ENCODE measurements at regions of chr9 and their contacts with region 1.

Region 1: GRCh38 chr9:18442629-18443491 is 31.1 kb upstream of the ADAMTSL1 start:
- DNase-seq: peak; percentile 71 to 86
- ATAC-seq: peak; percentile 77
- H3K4me3 ChIP-seq: no peak overlapping the region
- H3K27ac ChIP-seq: no peak overlapping the region
- H3K4me1 ChIP-seq: peaks cover 0 to 12% of the 10 kb centered on the region in 2 donors
- H3K27me3 ChIP-seq: no peaks in the 10 kb centered on the region

Region 2: DNA sequence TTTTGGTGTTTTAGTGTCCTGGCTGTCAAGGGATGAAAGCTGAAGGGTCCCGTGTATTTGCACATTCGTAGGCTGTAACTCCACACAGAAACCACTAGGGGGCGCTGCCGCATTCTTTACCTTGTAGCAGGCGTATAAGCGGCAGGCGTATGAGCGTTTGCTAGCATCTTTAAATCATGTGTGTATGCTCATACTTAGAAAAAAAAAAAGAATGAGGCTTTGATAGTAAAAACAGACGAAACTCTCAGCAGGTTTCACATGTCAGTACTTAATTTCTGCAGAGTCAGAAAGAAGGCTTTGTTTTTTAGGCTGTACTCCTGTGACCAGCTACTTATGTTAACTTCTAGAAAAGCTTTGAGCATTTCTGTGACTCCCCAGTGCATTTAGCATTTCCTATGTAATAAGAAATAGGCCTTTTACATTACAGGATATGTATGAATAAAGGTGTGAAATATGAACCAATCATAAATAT is 187.7 kb before region 1 on chr9:
- intact Hi-C with region 1: loop called (anchors 5 kb)
- DNase-seq: peak; percentile 83 to 94
- ATAC-seq: peak; percentile 88
- H3K4me3 ChIP-seq: no peak overlapping the region
- H3K27ac ChIP-seq: no peak overlapping the region
- H3K4me1 ChIP-seq: peaks cover 0 to 4% of the 10 kb centered on the region in 2 donors
- H3K27me3 ChIP-seq: no peaks in the 10 kb centered on the region

Region 3: DNA sequence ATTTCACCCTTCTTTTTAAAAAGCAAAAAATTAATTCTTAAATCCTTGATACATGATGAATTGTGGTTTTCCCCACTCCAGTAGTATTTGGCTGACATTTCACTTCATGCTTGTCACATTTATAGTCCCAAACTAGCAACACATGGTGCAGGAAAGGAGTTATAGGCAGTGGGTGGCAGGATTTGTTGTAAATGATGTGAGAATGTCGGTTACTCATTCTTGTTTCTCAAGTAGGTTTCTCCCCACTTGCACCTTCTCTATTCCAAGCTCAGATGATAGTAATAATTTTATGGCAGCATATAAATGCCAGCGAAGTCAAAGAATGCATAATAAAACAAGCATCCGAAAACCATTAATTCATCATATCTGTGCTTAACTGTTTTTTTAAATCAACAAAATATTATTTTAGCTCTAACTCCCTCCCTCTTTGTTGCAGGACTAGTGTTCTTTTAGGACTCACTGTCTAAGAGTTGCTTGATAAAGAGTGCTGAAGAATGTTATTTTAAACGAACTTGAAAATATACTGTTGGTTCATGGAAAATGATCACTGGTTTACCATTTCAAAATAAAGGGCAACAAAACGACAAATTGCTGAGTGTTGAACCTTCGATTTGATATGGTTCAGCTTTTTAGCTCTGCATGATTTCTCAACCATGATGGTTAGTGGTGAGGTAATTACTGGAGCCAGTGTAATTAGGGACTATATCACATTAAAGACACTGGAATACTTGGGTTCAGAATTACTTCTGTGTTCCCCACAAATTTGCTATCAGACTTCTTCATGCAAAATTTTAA is 57.0 kb before region 1 on chr9:
- intact Hi-C with region 1: loop called in 1 of 2 experiments (anchors 10 kb)
- DNase-seq: no peak
- ATAC-seq: no peak
- H3K4me3 ChIP-seq: peak overlapping the region in 1 of 2 donors; percentile 18
- H3K27ac ChIP-seq: no peak overlapping the region
- H3K4me1 ChIP-seq: peaks cover 2 to 6% of the 10 kb centered on the region in 2 donors
- H3K27me3 ChIP-seq: no peaks in the 10 kb centered on the region

Region 4: GRCh38 chr9:18721267-18721994 is 278.6 kb after region 1 on chr9:
- intact Hi-C with region 1: no loop called
- DNase-seq: no peak
- ATAC-seq: no peak
- H3K4me3 ChIP-seq: no peak overlapping the region
- H3K27ac ChIP-seq: no peak overlapping the region
- H3K4me1 ChIP-seq: no peaks in the 10 kb centered on the region
- H3K27me3 ChIP-seq: no peaks in the 10 kb centered on the region

Region 5: DNA sequence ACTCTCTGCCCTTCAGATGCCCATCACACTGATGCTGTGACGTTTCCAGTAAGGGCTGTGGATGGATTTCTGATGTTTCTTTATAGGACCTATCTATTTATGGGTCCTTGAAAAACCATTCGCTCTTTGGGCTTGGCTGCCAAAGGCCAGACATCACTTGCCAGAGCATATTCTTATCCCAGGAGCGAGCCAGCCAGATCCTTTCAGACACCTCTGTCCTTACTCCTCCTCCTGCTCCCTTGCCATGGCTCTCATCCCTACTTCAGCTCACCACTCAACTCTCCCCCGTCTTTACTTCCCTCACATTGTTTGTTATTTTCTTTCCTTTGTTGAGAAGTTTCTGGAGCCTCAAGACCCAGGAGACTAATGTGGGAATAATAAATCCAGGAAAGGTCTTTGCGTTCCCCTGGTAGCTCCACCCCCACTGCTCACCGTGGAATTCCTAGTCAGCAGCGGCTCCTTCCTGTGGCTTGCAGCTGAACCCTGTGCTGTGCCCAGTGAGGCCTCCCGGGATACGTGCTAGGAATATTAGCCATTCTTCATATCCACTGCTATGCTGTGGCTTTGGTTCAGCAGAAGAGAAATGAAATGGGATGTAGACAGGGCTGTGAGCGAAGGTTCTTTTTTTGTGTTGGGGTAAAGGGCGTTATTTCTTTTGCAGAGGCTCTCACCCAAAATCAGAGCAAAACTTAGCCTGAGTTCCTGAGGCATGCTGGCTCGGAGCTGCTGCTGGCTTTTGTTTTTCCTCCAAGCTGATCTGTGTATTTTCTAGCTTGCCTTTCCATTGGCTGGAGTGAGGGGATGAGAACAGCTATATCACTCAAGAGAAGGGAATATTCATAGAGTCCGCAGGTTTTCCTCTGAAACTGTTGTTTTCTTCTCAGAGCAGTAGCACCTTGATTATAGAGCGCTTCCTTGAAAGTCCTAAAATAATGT is 419.0 kb after region 1 on chr9:
- intact Hi-C with region 1: loop called in 1 of 2 experiments (anchors 5 kb)
- DNase-seq: peak; percentile 83 to 85
- ATAC-seq: peak; percentile 90
- H3K4me3 ChIP-seq: no peak overlapping the region
- H3K27ac ChIP-seq: peak overlapping the region; percentile 84 to 87
- H3K4me1 ChIP-seq: peaks cover 0 to 2% of the 10 kb centered on the region in 2 donors
- H3K27me3 ChIP-seq: no peaks in the 10 kb centered on the region

Region 6: DNA sequence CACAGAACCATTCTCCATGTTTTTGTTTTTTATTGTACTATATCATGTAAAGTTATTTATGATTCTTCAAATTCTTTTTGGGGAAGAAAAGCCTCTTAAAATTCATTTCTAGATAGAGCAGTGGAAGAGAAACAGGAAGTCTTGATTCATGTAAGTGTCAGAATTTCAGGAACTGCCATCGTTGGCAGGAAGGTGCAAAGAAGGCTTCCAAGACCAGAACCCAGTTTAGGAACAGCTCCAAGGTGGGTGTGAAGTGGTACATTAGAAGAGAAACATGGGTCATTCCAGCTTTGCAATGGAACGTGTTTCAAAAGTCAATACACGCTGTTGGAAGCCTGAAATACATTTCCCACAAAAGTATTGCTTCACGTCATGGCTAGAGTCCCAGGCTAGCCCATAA is 575.3 kb after region 1 on chr9:
- intact Hi-C with region 1: loop called (anchors 10 kb)
- DNase-seq: no peak
- ATAC-seq: no peak
- H3K4me3 ChIP-seq: no peak overlapping the region
- H3K27ac ChIP-seq: no peak overlapping the region
- H3K4me1 ChIP-seq: peaks cover 0 to 2% of the 10 kb centered on the region in 2 donors
- H3K27me3 ChIP-seq: no peaks in the 10 kb centered on the region

Region 7: DNA sequence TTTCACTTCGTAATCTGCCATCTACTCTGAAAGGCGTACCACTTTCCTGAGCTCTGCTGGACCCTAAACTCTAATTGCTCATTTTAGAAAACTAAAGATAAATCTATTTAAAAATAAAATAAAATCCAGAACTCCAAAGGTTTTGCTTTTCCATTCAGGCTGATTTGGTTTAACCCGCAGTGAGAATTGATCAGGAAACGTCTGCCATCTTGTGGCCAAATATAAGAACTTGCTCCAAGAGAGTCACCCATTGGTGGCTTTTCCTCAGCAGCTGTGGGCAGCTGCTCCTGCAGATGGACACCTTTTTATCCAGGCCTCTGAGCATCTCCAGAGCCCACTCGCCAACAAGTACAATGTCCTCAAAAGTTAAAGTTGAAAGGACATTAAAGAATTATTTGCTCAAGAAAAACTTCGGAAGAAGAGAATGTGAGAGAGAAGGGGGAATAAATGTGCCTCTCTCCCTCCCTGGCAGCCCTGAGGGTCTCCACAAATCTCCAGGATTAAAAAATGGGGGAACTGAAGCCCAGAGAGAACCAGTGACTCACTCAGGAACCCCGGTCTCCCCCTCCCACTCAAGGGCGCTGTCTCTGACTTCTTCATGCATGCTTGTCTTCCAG is 586.1 kb after region 1 on chr9:
- intact Hi-C with region 1: loop called in 1 of 2 experiments (anchors 10 kb)
- DNase-seq: no peak
- ATAC-seq: peak; percentile 83
- H3K4me3 ChIP-seq: no peak overlapping the region
- H3K27ac ChIP-seq: no peak overlapping the region
- H3K4me1 ChIP-seq: no peaks in the 10 kb centered on the region
- H3K27me3 ChIP-seq: no peaks in the 10 kb centered on the region

Region 8: DNA sequence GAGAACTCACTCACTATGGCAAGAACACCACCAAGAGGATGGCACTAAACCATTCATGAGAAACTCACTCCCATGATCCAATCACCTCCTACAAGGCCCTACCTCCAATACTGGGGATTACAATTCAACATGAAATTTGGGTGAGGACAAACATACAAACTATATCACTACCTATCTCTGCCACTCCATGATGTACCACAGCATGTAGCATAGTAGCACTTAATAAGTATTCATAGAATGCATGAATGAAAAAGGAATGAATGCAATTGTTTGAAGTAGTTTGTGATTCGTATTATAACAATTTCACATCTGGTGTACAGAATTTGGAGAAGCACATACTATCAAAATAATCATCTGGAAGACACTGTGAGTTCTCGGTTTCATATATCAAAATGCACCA is 1373.9 kb after region 1 on chr9:
- intact Hi-C with region 1: no loop called
- DNase-seq: no peak
- ATAC-seq: no peak
- H3K4me3 ChIP-seq: no peak overlapping the region
- H3K27ac ChIP-seq: no peak overlapping the region
- H3K4me1 ChIP-seq: no peaks in the 10 kb centered on the region
- H3K27me3 ChIP-seq: no peaks in the 10 kb centered on the region